Panc1 (cell line): ENCODE measurements at regions of chr12 and their contacts with region 1.

Region 1: DNA sequence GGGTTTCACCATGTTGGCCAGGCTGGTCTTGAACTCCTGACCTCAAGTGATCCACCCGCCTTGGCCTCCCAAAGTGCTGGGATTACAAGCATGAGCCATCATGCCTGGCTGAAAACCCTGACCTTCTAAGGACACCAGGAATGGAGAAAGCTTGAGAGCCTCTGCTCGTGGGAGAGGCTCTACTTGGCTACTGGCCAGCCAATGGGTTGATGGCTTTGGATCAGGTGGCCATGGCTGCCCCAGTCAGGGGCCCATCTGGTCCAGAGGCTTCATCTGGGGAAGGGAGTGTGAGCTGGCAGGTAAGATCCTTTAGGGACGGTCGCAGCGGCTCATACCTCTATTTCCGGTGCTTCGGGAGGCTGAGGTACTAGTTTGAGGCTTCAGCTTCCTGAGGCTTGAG is 42.5 kb upstream of the PPP1CC start:
- DNase-seq: no peak
- ATAC-seq: no peak; the same call in 1 of the 2 replicates
- H3K4me3 ChIP-seq: no peak overlapping the region
- H3K27ac ChIP-seq: no peak overlapping the region
- H3K4me1 ChIP-seq: no peaks in the 10 kb centered on the region
- H3K27me3 ChIP-seq: no peaks in the 10 kb centered on the region
- CTCF ChIP-seq: no peak

Region 2: GRCh38 chr12:110689281-110690126 is 95.7 kb before region 1 on chr12:
- CTCF ChIA-PET with region 1: no interaction called
- POLR2A ChIA-PET with region 1: interaction called, 11 read pairs
- in situ Hi-C with region 1: no loop called
- intact Hi-C with region 1: no loop called
- DNase-seq: no peak
- ATAC-seq: peak; percentile 76
- H3K4me3 ChIP-seq: peak overlapping the region; percentile 32 to 47
- H3K27ac ChIP-seq: no peak overlapping the region
- H3K4me1 ChIP-seq: no peaks in the 10 kb centered on the region; the same call in 1 of the 2 replicates
- H3K27me3 ChIP-seq: peaks cover 4% of the 10 kb centered on the region
- CTCF ChIP-seq: no peak

Region 3: GRCh38 chr12:110721570-110721969 is 63.7 kb before region 1 on chr12:
- CTCF ChIA-PET with region 1: no interaction called
- POLR2A ChIA-PET with region 1: no interaction called
- in situ Hi-C with region 1: no loop called
- intact Hi-C with region 1: no loop called
- DNase-seq: no peak
- ATAC-seq: no peak
- H3K4me3 ChIP-seq: no peak overlapping the region
- H3K27ac ChIP-seq: no peak overlapping the region
- H3K4me1 ChIP-seq: no peaks in the 10 kb centered on the region
- H3K27me3 ChIP-seq: no peaks in the 10 kb centered on the region
- CTCF ChIP-seq: no peak